ENCODE measurements at regions of chr2 and their contacts with region 1.

Region 1: GRCh38 chr2:141207036-141207385 is 923.8 kb downstream of the LRP1B start:
- DNase-seq: no peak

Region 2: GRCh38 chr2:141015341-141016047 is 191.5 kb before region 1 on chr2:
- intact Hi-C with region 1: loop called (anchors 10 kb)
- DNase-seq: peak; percentile 76

Region 3: GRCh38 chr2:141348481-141348880 is 141.5 kb after region 1 on chr2:
- intact Hi-C with region 1: no loop called
- DNase-seq: no peak